ENCODE measurements at regions of chr15 and their contacts with region 1.

Region 1: DNA sequence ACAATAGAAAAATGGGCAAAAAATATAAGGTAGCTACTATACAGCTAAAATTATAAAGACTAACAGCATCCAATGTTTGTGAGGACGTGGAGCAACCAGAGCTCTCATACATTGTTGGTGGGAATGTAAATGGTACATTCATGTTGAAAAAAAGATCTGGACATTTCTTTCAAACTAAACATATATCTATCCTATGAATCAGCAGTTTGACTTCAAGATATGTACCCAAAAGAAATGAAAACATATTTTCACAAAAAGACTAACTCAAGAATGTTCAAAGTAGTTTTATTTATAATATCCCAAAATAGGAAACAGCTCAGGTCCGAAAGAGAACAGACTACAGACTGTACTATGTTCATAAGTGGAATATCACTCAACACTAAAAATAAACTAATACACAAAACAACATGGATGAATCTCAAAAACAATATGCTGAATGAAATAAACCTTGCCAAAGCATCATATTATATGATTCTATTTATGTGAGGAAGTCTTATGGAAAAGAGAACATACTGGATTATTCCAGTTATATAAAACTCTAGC is 8.8 kb upstream of the TTBK2 start:
- DNase-seq: no peak
- ATAC-seq: no peak
- H3K4me3 ChIP-seq: no peak overlapping the region
- H3K4me3 Mint-ChIP-seq: no peak overlapping the region
- H3K27ac ChIP-seq: no peak overlapping the region
- H3K27ac Mint-ChIP-seq: no peak overlapping the region
- H3K4me1 ChIP-seq: no peaks in the 10 kb centered on the region
- H3K4me1 Mint-ChIP-seq: no peaks in the 10 kb centered on the region
- H3K27me3 ChIP-seq: no peaks in the 10 kb centered on the region
- H3K27me3 Mint-ChIP-seq: no peaks in the 10 kb centered on the region
- CTCF ChIP-seq: no peak

Region 2: GRCh38 chr15:42704492-42704926 is 224.9 kb before region 1 on chr15:
- CTCF ChIA-PET with region 1: interaction called, 85 read pairs
- POLR2A ChIA-PET with region 1: no interaction called
- intact Hi-C with region 1: no loop called
- DNase-seq: peak; percentile 73
- ATAC-seq: peak; percentile 89
- H3K4me3 ChIP-seq: no peak overlapping the region
- H3K4me3 Mint-ChIP-seq: no peak overlapping the region
- H3K27ac ChIP-seq: no peak overlapping the region
- H3K27ac Mint-ChIP-seq: no peak overlapping the region
- H3K4me1 ChIP-seq: no peaks in the 10 kb centered on the region
- H3K4me1 Mint-ChIP-seq: no peaks in the 10 kb centered on the region
- H3K27me3 ChIP-seq: no peaks in the 10 kb centered on the region
- H3K27me3 Mint-ChIP-seq: no peaks in the 10 kb centered on the region
- CTCF ChIP-seq: peak; percentile 78

Region 3: GRCh38 chr15:43029476-43029875 is 100.1 kb after region 1 on chr15:
- CTCF ChIA-PET with region 1: no interaction called
- POLR2A ChIA-PET with region 1: no interaction called
- intact Hi-C with region 1: no loop called
- DNase-seq: no peak
- ATAC-seq: no peak
- H3K4me3 ChIP-seq: no peak overlapping the region
- H3K4me3 Mint-ChIP-seq: no peak overlapping the region
- H3K27ac ChIP-seq: no peak overlapping the region
- H3K27ac Mint-ChIP-seq: no peak overlapping the region
- H3K4me1 ChIP-seq: no peaks in the 10 kb centered on the region
- H3K4me1 Mint-ChIP-seq: no peaks in the 10 kb centered on the region
- H3K27me3 ChIP-seq: no peaks in the 10 kb centered on the region
- H3K27me3 Mint-ChIP-seq: no peaks in the 10 kb centered on the region
- CTCF ChIP-seq: no peak